Activated B cell treated with CpG ODN at 0.5 μM for 24 hours (primary cell): ENCODE measurements at regions of chr11 and their contacts with region 1.

Region 1: GRCh38 chr11:66136752-66137123 is 66.7 kb downstream of the PACS1 start:
- DNase-seq: no peak
- ATAC-seq: no peak
- H3K4me3 Mint-ChIP-seq: no peak overlapping the region
- H3K27ac Mint-ChIP-seq: peak overlapping the region; percentile 47
- H3K4me1 Mint-ChIP-seq: peaks cover 84% of the 10 kb centered on the region
- H3K27me3 Mint-ChIP-seq: no peaks in the 10 kb centered on the region
- CTCF ChIP-seq: no peak

Region 2: DNA sequence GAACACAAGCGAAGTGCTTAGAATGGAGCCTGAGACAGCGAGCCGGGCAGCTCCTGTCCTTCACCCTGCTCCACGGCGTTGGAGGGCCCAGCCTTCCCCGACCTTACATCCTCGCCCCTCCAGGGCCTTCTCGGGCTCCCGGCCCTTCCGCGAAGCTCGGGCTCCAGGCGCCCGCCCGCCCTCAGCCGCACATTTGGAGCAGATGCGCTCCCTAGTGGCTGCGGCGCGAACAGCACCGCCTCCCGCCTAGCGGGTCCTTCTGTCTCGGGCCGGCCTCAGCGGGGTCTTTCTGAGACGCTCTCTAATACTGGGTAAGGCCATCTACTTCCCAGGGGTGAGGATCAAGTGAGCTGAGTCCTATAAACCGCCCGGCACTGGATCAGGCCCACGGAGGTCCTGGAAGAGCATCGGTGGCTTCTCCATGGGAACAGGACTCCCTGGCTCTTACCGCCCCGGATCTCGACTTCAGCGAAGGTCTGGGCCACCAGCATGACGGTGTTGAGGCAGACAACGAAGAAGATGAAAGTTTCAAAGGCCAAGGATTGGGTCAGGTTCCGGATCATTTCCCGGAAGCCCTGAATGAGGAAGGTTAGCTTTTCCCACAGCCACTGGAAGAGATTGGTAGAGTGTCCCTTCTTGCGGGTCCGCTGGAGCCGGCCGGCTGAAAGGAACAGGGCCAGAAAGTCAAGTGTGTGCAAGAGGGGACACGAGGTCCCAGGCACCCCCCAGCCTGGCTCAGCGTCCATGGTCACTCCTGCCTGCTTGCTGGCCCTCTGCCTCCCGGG is 114.1 kb before region 1 on chr11:
- CTCF ChIA-PET with region 1: no interaction called
- POLR2A ChIA-PET with region 1: no interaction called
- intact Hi-C with region 1: loop called (anchors 1 kb)
- DNase-seq: peak; percentile 82
- ATAC-seq: peak; percentile 98
- H3K4me3 Mint-ChIP-seq: peak overlapping the region; percentile 24
- H3K27ac Mint-ChIP-seq: no peak overlapping the region
- H3K4me1 Mint-ChIP-seq: peaks cover 4% of the 10 kb centered on the region
- H3K27me3 Mint-ChIP-seq: peaks cover 8% of the 10 kb centered on the region
- CTCF ChIP-seq: peak; percentile 25

Region 3: DNA sequence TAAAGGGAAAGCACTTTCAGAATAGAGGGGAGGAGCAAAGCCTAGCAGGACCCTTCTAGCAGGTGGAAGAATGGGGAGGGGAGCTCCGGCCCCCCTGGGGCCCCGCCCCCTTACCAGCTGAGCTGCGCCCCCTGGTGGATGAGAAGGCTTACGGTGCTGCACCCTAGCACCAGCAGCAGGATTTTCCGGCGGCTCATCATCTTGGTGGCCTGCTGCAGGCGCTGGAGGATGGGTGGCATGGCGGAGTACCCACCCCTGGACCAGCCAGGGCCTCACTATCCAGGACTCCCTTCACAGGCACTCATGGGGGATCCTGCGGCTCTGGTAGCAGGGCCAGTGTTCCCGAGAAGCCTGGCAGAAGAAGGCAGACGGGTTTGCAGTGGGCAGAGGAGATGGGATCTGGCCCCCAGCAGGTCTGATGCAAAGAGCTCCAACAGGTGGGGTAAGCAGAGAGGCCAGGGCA is 91.5 kb before region 1 on chr11:
- CTCF ChIA-PET with region 1: interaction called, 24 read pairs
- POLR2A ChIA-PET with region 1: no interaction called
- intact Hi-C with region 1: loop called (anchors 1 kb)
- DNase-seq: peak; percentile 79
- ATAC-seq: peak; percentile 99
- H3K4me3 Mint-ChIP-seq: no peak overlapping the region
- H3K27ac Mint-ChIP-seq: no peak overlapping the region
- H3K4me1 Mint-ChIP-seq: peaks cover 9% of the 10 kb centered on the region
- H3K27me3 Mint-ChIP-seq: peaks cover 8% of the 10 kb centered on the region
- CTCF ChIP-seq: peak; percentile 63

Region 4: DNA sequence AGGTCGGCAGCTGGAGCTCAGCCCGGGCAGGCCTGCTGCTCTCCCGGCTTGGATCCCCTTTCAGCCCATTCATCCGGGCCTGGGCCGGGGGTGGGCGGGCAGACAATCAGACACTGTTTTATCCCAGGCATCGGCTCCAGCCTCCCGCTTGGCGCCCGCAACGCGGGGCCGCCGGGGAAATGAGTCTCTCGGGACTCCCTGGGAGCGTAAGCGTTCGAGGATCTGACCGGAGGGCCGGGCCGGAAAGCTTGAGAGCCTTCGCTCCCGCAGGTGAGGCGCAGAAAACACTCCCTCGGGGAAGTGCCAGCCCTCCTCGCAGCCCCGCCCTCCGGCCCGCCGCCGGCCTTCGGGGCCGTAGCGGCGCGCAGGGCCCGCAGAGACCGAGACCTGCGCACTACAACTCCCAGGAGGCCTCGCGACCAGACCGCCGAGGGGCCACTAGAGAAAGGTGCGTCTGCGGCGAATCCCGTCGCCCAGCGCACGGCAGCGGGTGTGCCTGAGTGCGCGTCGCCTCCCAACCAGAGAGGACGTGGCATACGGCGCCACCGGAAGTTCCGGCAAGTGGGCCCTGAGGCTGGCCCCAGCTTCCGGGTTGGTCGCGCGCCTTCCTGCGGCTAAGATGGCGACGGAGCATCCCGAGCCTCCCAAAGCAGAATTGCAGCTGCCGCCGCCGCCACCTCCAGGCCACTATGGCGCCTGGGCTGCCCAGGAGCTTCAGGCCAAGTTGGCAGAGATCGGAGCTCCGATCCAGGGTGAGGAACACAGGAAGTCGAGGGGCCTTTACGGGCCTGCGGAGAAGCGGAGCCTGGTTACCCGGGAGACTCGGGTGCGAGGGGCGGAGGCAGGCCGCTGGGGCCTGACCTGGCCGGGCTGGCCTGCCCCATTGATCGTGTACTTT is 84.7 kb before region 1 on chr11 and contains the start of gene SF3B2:
- CTCF ChIA-PET with region 1: interaction called, 4 read pairs
- POLR2A ChIA-PET with region 1: interaction called, 19 read pairs
- intact Hi-C with region 1: no loop called
- DNase-seq: peak; percentile 91
- ATAC-seq: peak; percentile 97
- H3K4me3 Mint-ChIP-seq: peak within 1 kb of the TSS; percentile 99
- H3K27ac Mint-ChIP-seq: peak within 1 kb of the TSS; percentile 96
- H3K4me1 Mint-ChIP-seq: peaks cover 27% of the 10 kb centered on the region
- H3K27me3 Mint-ChIP-seq: peaks cover 8% of the 10 kb centered on the region
- CTCF ChIP-seq: no peak
- total RNA-seq, gene SF3B2: 198 and 219 TPM in 2 replicates

Region 5: GRCh38 chr11:66112601-66113098 is 24.1 kb before region 1 on chr11:
- CTCF ChIA-PET with region 1: interaction called, 7 read pairs
- POLR2A ChIA-PET with region 1: interaction called, 10 read pairs
- intact Hi-C with region 1: no loop called
- DNase-seq: no peak
- ATAC-seq: peak; percentile 53
- H3K4me3 Mint-ChIP-seq: peak overlapping the region; percentile 58
- H3K27ac Mint-ChIP-seq: peak overlapping the region; percentile 83
- H3K4me1 Mint-ChIP-seq: peaks cover 96% of the 10 kb centered on the region
- H3K27me3 Mint-ChIP-seq: no peaks in the 10 kb centered on the region
- CTCF ChIP-seq: no peak

Region 6: GRCh38 chr11:66150140-66150539 is 13.4 kb after region 1 on chr11:
- CTCF ChIA-PET with region 1: no interaction called
- POLR2A ChIA-PET with region 1: no interaction called
- intact Hi-C with region 1: no loop called
- DNase-seq: no peak
- ATAC-seq: no peak
- H3K4me3 Mint-ChIP-seq: no peak overlapping the region
- H3K27ac Mint-ChIP-seq: peak overlapping the region; percentile 4
- H3K4me1 Mint-ChIP-seq: peaks cover 54% of the 10 kb centered on the region
- H3K27me3 Mint-ChIP-seq: no peaks in the 10 kb centered on the region
- CTCF ChIP-seq: no peak